Caco-2 (cell line): ENCODE measurements at regions of chr2 and their contacts with region 1.

Region 1: GRCh38 chr2:27754138-27754588 is 17.4 kb upstream of the MRPL33 start:
- DNase-seq: peak; percentile 91 to 92
- H3K4me3 ChIP-seq: peak overlapping the region; percentile 56
- H3K4me3 Mint-ChIP-seq: peak overlapping the region; percentile 89
- H3K27ac Mint-ChIP-seq: peak overlapping the region; percentile 99
- H3K4me1 ChIP-seq: peaks cover 33% of the 10 kb centered on the region
- H3K4me1 Mint-ChIP-seq: peaks cover 21% of the 10 kb centered on the region
- H3K27me3 ChIP-seq: no peaks in the 10 kb centered on the region
- H3K27me3 Mint-ChIP-seq: no peaks in the 10 kb centered on the region
- CTCF ChIP-seq: peak; percentile 77 to 83

Region 2: DNA sequence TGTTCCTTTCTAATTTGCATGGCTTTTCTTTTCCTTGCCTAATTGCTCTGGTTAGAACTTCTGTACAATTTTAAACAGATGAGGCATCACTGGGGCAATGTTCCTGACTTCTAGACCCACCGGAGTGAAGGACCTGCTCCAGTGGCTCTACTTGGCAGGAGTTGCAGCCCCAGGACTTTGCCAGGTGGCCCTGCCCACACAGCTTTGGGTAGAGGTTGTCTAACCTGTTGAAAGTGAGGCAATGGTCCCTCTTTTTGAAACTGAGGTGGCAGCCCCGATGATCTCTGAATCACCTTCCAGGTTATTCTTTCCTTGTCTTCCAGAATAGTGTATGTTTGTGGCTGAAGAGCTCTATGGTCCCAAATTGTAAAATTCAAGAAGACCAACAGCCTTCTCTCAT is 201.2 kb before region 1 on chr2:
- CTCF ChIA-PET with region 1: no interaction called
- POLR2A ChIA-PET with region 1: no interaction called
- intact Hi-C with region 1: no loop called
- DNase-seq: no peak
- H3K4me3 ChIP-seq: no peak overlapping the region
- H3K4me3 Mint-ChIP-seq: no peak overlapping the region
- H3K27ac Mint-ChIP-seq: no peak overlapping the region
- H3K4me1 ChIP-seq: no peaks in the 10 kb centered on the region
- H3K4me1 Mint-ChIP-seq: no peaks in the 10 kb centered on the region
- H3K27me3 ChIP-seq: no peaks in the 10 kb centered on the region
- H3K27me3 Mint-ChIP-seq: peaks cover 6% of the 10 kb centered on the region
- CTCF ChIP-seq: no peak

Region 3: GRCh38 chr2:27628767-27629709 is 125.1 kb before region 1 on chr2 and contains the starts of genes CCDC121 and GPN1:
- CTCF ChIA-PET with region 1: no interaction called
- POLR2A ChIA-PET with region 1: interaction called, 10 read pairs
- intact Hi-C with region 1: no loop called
- DNase-seq: peak; percentile 85 to 88
- H3K4me3 ChIP-seq: peak within 1 kb of the TSS; percentile 71
- H3K4me3 Mint-ChIP-seq: no peak within 1 kb of the TSS
- H3K27ac Mint-ChIP-seq: no peak within 1 kb of the TSS
- H3K4me1 ChIP-seq: peaks cover 10% of the 10 kb centered on the region; the same call in 1 of the 2 replicates
- H3K4me1 Mint-ChIP-seq: peaks cover 14% of the 10 kb centered on the region
- H3K27me3 ChIP-seq: no peaks in the 10 kb centered on the region
- H3K27me3 Mint-ChIP-seq: no peaks in the 10 kb centered on the region
- CTCF ChIP-seq: no peak
- total RNA-seq, gene CCDC121: 3.9 and 4.7 TPM in 2 replicates
- total RNA-seq, gene GPN1: 45.9 and 60.9 TPM in 2 replicates

Region 4: GRCh38 chr2:27723372-27724144 is 30.6 kb before region 1 on chr2:
- CTCF ChIA-PET with region 1: interaction called, 50 read pairs
- POLR2A ChIA-PET with region 1: interaction called, 25 read pairs
- intact Hi-C with region 1: loop called (anchors 1 kb)
- DNase-seq: peak; percentile 78 to 81
- H3K4me3 ChIP-seq: no peak overlapping the region
- H3K4me3 Mint-ChIP-seq: no peak overlapping the region
- H3K27ac Mint-ChIP-seq: peak overlapping the region; percentile 80
- H3K4me1 ChIP-seq: peaks cover 60% of the 10 kb centered on the region
- H3K4me1 Mint-ChIP-seq: peaks cover 48% of the 10 kb centered on the region
- H3K27me3 ChIP-seq: no peaks in the 10 kb centered on the region
- H3K27me3 Mint-ChIP-seq: no peaks in the 10 kb centered on the region
- CTCF ChIP-seq: peak; percentile 85 to 87

Region 5: DNA sequence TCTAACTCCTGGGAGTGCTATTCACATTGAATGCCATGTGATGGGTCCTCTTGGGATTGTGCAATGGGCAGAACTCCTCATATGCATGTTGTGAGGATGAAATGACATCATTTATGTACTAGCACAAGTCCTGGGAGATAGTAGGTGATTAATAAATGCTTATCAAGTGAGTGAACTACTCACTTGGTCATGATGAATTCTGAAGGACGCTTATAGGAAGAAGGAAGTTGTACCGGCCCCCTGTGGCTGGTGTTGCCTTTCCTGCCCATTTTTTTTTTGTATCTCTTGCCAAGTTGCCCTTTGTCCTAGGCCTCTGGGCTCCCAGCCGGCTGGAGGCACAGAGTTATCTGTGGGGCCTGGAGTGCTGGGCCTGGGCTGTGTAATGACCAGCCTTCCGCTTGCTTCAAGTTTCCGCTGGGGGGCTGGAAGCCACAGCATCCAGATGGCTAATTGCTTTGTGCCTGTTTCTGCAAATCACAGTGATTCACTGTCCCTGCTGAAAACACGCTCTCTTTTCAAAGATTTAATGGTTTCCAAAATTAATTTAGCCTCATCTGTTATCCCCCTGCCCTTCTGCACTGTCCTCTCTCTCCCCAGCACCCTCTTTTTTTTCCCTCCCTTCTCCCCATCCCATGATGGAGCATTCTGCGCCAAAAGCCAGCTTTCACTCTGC is 16.4 kb before region 1 on chr2:
- CTCF ChIA-PET with region 1: interaction called, 3 read pairs
- POLR2A ChIA-PET with region 1: interaction called, 22 read pairs
- intact Hi-C with region 1: loop called (anchors 1 kb)
- DNase-seq: peak in 1 of 2 experiments; percentile 79
- H3K4me3 ChIP-seq: no peak overlapping the region
- H3K4me3 Mint-ChIP-seq: peak overlapping the region; percentile 66
- H3K27ac Mint-ChIP-seq: peak overlapping the region; percentile 90
- H3K4me1 ChIP-seq: peaks cover 27% of the 10 kb centered on the region
- H3K4me1 Mint-ChIP-seq: peaks cover 27% of the 10 kb centered on the region
- H3K27me3 ChIP-seq: no peaks in the 10 kb centered on the region; the same call in 1 of the 2 replicates
- H3K27me3 Mint-ChIP-seq: no peaks in the 10 kb centered on the region
- CTCF ChIP-seq: no peak

Region 6: DNA sequence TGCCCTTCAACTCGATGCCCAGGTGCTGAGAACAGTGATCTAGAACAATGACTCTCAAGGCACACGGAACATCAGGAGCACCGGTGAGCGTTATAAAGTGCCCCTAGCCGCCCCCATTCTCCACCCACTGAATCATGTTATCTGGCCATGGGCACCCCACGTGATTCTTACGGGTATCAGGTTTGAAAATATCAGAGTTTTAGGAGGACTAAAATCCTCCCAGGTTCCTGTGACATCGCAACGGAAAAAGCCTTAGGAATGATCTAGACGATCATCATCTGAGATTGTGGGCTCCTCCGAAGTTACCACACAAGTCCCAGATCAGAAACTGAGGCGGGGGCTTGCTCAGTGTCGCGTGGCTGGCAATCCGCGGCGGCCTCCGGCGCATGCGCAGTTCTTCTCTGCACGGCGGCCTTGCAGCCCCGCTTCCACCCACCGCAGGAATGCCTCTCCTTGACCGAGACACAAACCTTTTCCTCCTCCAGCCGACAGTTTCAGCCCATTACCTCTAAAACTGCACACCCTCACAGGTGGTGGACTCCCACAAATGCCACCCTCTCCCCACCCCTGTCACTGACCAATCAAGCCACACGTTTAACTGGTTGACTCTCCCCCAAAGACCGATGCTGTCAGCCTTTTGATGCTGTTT is 11.6 kb after region 1 on chr2:
- CTCF ChIA-PET with region 1: interaction called, 3 read pairs
- POLR2A ChIA-PET with region 1: interaction called, 37 read pairs
- intact Hi-C with region 1: loop called (anchors 1 kb)
- DNase-seq: peak; percentile 95 to 96
- H3K4me3 ChIP-seq: peak overlapping the region; percentile 22
- H3K4me3 Mint-ChIP-seq: peak overlapping the region; percentile 85
- H3K27ac Mint-ChIP-seq: peak overlapping the region; percentile 98
- H3K4me1 ChIP-seq: peaks cover 59% of the 10 kb centered on the region
- H3K4me1 Mint-ChIP-seq: peaks cover 27% of the 10 kb centered on the region
- H3K27me3 ChIP-seq: no peaks in the 10 kb centered on the region
- H3K27me3 Mint-ChIP-seq: no peaks in the 10 kb centered on the region
- CTCF ChIP-seq: no peak

Region 7: GRCh38 chr2:27890146-27890923 is 136.2 kb after region 1 on chr2 and contains the starts of genes BABAM2 and RBKS:
- CTCF ChIA-PET with region 1: no interaction called
- POLR2A ChIA-PET with region 1: interaction called, 14 read pairs
- intact Hi-C with region 1: no loop called
- DNase-seq: peak; percentile 93 to 94
- H3K4me3 ChIP-seq: peak within 1 kb of the TSS; percentile 63
- H3K4me3 Mint-ChIP-seq: peak within 1 kb of the TSS; percentile 100
- H3K27ac Mint-ChIP-seq: peak within 1 kb of the TSS; percentile 99
- H3K4me1 ChIP-seq: no peaks in the 10 kb centered on the region
- H3K4me1 Mint-ChIP-seq: no peaks in the 10 kb centered on the region
- H3K27me3 ChIP-seq: no peaks in the 10 kb centered on the region
- H3K27me3 Mint-ChIP-seq: no peaks in the 10 kb centered on the region
- CTCF ChIP-seq: no peak
- total RNA-seq, gene BABAM2: 50.7 and 57.3 TPM in 2 replicates
- total RNA-seq, gene RBKS: 7.1 and 7.4 TPM in 2 replicates

Region 8: DNA sequence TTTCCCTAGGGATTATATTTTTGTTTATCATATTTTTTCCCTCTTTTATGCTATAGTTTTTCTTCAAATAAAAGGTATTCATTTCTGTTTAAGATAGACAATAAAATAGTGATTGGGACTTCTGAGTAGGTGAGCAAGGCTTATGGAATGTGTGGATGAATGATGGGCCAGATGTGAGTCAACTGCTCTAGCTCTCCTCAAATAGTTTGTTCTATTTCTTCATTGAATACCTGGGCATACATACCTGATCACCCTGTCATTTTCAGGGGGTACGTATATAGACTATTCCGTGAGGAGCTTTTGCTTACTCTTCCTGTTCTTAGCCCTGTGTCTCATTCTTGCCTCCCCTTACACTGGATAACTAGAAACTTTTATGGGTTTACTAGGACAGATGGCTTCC is 178.2 kb after region 1 on chr2:
- CTCF ChIA-PET with region 1: no interaction called
- POLR2A ChIA-PET with region 1: interaction called, 3 read pairs
- intact Hi-C with region 1: loop called (anchors 5 kb)
- DNase-seq: peak in 1 of 2 experiments; percentile 31
- H3K4me3 ChIP-seq: no peak overlapping the region
- H3K4me3 Mint-ChIP-seq: peak overlapping the region; percentile 11
- H3K27ac Mint-ChIP-seq: peak overlapping the region; percentile 43
- H3K4me1 ChIP-seq: peaks cover 40% of the 10 kb centered on the region
- H3K4me1 Mint-ChIP-seq: peaks cover 21% of the 10 kb centered on the region
- H3K27me3 ChIP-seq: no peaks in the 10 kb centered on the region
- H3K27me3 Mint-ChIP-seq: no peaks in the 10 kb centered on the region
- CTCF ChIP-seq: no peak